Activated CD4-positive, alpha-beta T cell treated with anti-CD3 and anti-CD28 coated beads for 36 hours (primary cell): ENCODE measurements at regions of chr22 and their contacts with region 1.

Region 1: DNA sequence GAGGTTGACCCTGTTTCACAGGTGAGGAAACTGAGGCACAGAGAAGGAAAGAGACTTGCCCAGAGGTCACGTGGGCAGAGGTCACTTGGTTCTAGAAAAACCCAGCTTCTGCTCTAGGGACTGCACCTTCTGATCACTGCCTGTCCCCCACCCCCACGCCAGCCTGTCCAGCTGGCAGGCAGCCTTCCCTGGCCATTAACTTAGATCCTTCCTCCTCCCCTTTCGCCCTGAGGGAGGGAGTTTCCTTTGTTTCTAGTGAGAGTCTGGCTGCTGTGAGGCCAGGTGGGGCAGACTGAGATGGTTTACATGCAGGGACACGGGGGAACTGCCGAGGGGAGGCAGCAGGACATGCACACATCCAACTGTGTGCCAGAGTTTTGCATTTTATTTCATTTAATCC is 3.2 kb downstream of the FAM83F start:
- DNase-seq: no peak
- ATAC-seq: no peak
- H3K4me3 Mint-ChIP-seq: no peak overlapping the region
- H3K27ac Mint-ChIP-seq: no peak overlapping the region
- H3K4me1 Mint-ChIP-seq: peaks cover 8% of the 10 kb centered on the region
- H3K27me3 Mint-ChIP-seq: no peaks in the 10 kb centered on the region

Region 2: GRCh38 chr22:39777716-39778454 is 220.1 kb before region 1 on chr22:
- CTCF ChIA-PET with region 1: no interaction called
- POLR2A ChIA-PET with region 1: interaction called, 3 read pairs
- intact Hi-C with region 1: loop called in 1 of 2 experiments (anchors 5 kb)
- DNase-seq: no peak
- ATAC-seq: no peak
- H3K4me3 Mint-ChIP-seq: no peak overlapping the region
- H3K27ac Mint-ChIP-seq: no peak overlapping the region
- H3K4me1 Mint-ChIP-seq: peaks cover 34% of the 10 kb centered on the region
- H3K27me3 Mint-ChIP-seq: no peaks in the 10 kb centered on the region

Region 3: GRCh38 chr22:39954584-39955055 is 43.3 kb before region 1 on chr22:
- CTCF ChIA-PET with region 1: interaction called, 3 read pairs
- POLR2A ChIA-PET with region 1: interaction called, 6 read pairs
- intact Hi-C with region 1: loop called in 1 of 2 experiments (anchors 5 kb)
- DNase-seq: peak; percentile 53
- ATAC-seq: peak; percentile 40
- H3K4me3 Mint-ChIP-seq: no peak overlapping the region
- H3K27ac Mint-ChIP-seq: no peak overlapping the region
- H3K4me1 Mint-ChIP-seq: peaks cover 90% of the 10 kb centered on the region
- H3K27me3 Mint-ChIP-seq: no peaks in the 10 kb centered on the region